Activated CD8-positive, alpha-beta memory T cell treated with anti-CD3 and anti-CD28 coated beads, Interleukin-2, amount 10 ng/mL, durations not matched to agents 7 days and 5 days (primary cell): ENCODE measurements at regions of chr11 and their contacts with region 1.

Region 1: DNA sequence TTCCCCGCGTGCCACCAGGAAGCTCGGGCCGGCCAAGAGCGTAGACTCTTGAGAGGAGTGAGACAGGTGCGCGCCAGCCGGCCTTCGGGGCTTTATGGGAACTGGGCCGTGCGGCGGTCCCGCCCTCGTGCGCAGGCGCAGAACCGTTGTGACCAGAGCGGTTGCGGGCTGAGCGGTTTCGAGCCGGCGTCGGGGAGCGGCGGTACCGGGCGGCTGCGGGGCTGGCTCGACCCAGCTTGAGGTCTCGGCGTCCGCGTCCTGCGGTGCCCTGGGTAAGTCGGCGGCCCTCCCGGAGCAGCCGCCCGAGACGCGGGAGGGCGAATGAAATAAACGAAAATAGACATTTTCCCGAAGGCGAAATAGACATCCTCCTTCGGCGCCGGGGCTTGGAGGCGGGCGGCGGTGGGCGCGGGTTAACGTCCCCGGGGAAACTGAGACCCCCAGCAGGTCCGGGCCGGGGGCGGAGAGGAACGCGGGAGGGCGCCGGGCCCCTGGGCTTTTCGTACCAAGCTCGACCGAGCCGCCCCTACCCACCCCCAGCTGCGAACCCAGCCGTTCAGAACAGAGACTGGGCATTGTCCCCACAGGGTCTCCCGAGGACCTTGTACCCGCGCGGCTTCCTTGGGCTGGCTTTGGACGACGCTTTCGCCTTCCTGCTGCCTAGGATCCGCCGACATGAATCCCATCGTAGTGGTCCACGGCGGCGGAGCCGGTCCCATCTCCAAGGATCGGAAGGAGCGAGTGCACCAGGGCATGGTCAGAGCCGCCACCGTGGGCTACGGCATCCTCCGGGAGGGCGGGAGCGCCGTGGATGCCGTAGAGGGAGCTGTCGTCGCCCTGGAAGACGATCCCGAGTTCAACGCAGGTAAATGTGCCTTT is at the start of gene ASRGL1:
- DNase-seq: peak; percentile 80
- ATAC-seq: peak; percentile 93
- H3K4me3 Mint-ChIP-seq: peak within 1 kb of the TSS; percentile 81
- H3K27ac Mint-ChIP-seq: peak within 1 kb of the TSS; percentile 15
- H3K4me1 Mint-ChIP-seq: peaks cover 15% of the 10 kb centered on the region
- H3K27me3 Mint-ChIP-seq: peaks cover 46% of the 10 kb centered on the region
- total RNA-seq, gene ASRGL1: 3.7 to 9.0 TPM

Region 2: DNA sequence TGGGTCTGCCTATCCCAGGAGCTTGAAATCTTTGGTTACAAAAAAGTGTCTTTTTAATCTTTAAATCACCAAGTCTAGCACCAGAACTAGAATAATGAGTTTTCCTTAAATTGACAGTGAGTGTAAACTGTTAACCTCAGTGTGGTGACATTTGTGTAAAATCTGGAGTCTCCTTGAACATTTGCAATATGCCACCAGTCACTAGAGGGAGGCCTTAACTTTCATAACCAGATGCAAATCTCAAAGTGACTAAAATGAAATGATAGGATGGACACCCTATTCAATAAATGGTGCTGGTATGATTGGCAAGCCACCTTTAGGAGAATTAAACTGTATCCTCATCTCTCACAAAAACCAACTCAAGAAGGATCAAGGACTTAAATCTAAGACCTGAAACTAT is 103.8 kb before region 1 on chr11:
- CTCF ChIA-PET with region 1: no interaction called
- DNase-seq: no peak
- ATAC-seq: no peak
- H3K4me3 Mint-ChIP-seq: no peak overlapping the region
- H3K27ac Mint-ChIP-seq: no peak overlapping the region
- H3K4me1 Mint-ChIP-seq: peaks cover 2% of the 10 kb centered on the region
- H3K27me3 Mint-ChIP-seq: peaks cover 65% of the 10 kb centered on the region

Region 3: GRCh38 chr11:62324738-62325556 is 12.6 kb before region 1 on chr11:
- CTCF ChIA-PET with region 1: interaction called, 10 read pairs
- DNase-seq: peak; percentile 82
- ATAC-seq: peak; percentile 96
- H3K4me3 Mint-ChIP-seq: no peak overlapping the region
- H3K27ac Mint-ChIP-seq: no peak overlapping the region
- H3K4me1 Mint-ChIP-seq: peaks cover 16% of the 10 kb centered on the region
- H3K27me3 Mint-ChIP-seq: peaks cover 15% of the 10 kb centered on the region

Region 4: DNA sequence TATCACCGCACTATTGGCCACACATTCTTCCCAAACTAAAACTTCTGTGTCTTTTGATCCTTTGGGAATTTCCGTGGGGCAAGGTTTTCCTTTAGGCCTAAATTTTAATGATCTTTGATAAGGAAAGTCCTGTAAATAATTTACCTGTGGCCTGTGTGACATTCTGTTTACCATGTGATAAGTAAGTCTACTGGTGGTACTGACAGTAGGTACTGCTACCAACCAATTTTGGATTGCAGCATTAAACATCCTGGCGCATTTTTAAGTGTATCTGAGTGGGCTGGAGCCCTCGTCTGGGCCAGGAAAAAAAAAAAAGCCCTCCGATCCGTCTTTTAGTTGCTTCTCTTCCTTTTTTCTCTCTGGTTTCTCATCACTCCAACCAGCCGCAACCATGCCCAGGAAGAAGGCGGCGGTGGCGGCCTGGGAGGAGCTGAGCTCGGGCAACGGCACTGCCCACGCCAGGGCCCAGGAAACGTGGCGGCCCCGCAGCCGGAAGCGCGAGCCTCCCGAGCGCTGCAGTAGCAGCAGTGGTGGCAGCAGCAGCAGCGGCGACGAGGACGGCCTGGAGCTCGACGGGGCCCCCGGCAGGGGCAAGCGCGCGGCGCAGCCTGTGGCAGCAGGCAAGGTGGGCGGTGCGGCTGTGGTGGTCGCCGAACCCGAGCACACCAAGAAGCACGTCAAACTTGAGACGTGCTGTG is 33.4 kb after region 1 on chr11:
- CTCF ChIA-PET with region 1: interaction called, 42 read pairs
- DNase-seq: peak; percentile 68
- ATAC-seq: peak; percentile 95
- H3K4me3 Mint-ChIP-seq: peak overlapping the region; percentile 41
- H3K27ac Mint-ChIP-seq: peak overlapping the region; percentile 74
- H3K4me1 Mint-ChIP-seq: peaks cover 36% of the 10 kb centered on the region
- H3K27me3 Mint-ChIP-seq: peaks cover 3% of the 10 kb centered on the region

Region 5: GRCh38 chr11:62721994-62722393 is 384.5 kb after region 1 on chr11:
- CTCF ChIA-PET with region 1: no interaction called
- DNase-seq: no peak
- ATAC-seq: no peak
- H3K4me3 Mint-ChIP-seq: no peak overlapping the region
- H3K27ac Mint-ChIP-seq: no peak overlapping the region
- H3K4me1 Mint-ChIP-seq: peaks cover 68% of the 10 kb centered on the region
- H3K27me3 Mint-ChIP-seq: no peaks in the 10 kb centered on the region